ENCODE measurements at regions of chr4 and their contacts with region 1.

Region 1: GRCh38 chr4:15457406-15458201 is 12.1 kb upstream of the CC2D2A start:
- DNase-seq: no peak
- H3K4me3 ChIP-seq: no peak overlapping the region
- H3K27ac ChIP-seq: peak overlapping the region; percentile 61 to 79
- H3K4me1 ChIP-seq: peaks cover 8 to 58% of the 10 kb centered on the region in 2 donors
- H3K27me3 ChIP-seq: no peaks in the 10 kb centered on the region
- CTCF ChIP-seq: peak; percentile 65 to 79 (median 68)

Region 2: DNA sequence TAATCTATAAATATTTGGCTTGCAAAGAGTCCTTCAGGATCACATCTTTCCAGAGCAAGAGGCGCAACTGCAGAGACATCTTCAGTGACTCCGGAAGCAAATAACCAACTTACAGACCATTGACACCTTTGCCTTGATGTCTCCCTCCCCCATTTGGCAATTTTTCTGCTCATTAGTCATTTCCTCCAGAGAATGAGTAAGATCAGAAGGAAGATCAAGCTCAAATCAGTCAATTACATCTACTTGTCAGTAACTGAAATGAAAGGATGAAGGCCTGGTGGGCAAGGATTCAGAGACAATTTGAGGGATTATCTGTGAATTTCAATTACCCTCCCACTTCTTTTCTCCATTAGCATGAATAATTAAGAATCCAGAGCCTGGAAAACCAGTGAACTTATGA is 1120.9 kb before region 1 on chr4:
- intact Hi-C with region 1: no loop called
- DNase-seq: no peak
- H3K4me3 ChIP-seq: no peak overlapping the region
- H3K27ac ChIP-seq: no peak overlapping the region
- H3K4me1 ChIP-seq: no peaks in the 10 kb centered on the region
- H3K27me3 ChIP-seq: no peaks in the 10 kb centered on the region
- CTCF ChIP-seq: no peak

Region 3: GRCh38 chr4:14837860-14838259 is 619.7 kb before region 1 on chr4:
- intact Hi-C with region 1: loop called (anchors 5 kb)
- DNase-seq: no peak
- H3K4me3 ChIP-seq: no peak overlapping the region
- H3K27ac ChIP-seq: no peak overlapping the region
- H3K4me1 ChIP-seq: peaks cover 6 to 10% of the 10 kb centered on the region in 2 donors
- H3K27me3 ChIP-seq: no peaks in the 10 kb centered on the region
- CTCF ChIP-seq: peak in 2 of 3 experiments; percentile 19 to 25

Region 4: DNA sequence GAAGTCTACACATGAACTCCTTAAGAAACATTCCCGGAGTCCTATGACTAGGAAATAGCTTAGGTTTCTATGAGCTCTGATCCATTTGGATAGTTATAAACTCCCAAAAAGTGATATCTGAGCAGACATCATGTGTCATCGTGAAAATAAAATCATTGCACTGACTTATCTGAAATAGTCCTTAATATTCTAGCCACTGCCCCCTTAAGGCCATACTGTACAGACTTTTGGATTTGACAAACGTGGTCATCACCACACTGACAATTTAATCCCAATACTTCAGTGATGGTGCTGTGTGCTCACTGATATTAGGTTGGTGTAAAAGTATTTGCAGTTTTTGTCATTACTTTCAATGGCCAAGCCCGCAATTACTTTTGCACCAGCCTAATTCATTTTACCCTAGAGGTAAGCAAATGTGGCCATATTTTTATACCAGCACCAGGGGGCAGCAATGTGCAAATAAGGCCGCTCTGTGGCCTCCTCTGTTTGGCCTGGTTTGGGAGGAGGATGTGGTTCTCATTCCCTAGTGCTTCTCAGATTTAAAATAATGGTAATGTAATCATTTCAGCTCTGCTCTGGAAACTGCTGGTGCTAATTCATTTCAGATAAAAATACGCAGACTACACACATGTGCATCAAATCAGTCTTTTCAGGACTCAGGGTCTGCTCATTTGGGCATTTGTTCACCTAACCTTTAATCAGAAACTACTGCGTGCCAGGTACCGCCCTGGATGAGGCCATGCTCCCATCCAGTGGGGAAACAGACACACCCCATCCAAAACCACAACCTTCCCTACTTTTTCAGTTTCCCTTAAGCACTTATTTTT is 226.1 kb before region 1 on chr4:
- intact Hi-C with region 1: loop called (anchors 1 kb)
- DNase-seq: peak in 1 of 2 donors; percentile 92
- H3K4me3 ChIP-seq: no peak overlapping the region
- H3K27ac ChIP-seq: peak overlapping the region; percentile 66 to 86
- H3K4me1 ChIP-seq: peaks cover 21 to 41% of the 10 kb centered on the region in 2 donors
- H3K27me3 ChIP-seq: no peaks in the 10 kb centered on the region
- CTCF ChIP-seq: peak; percentile 57 to 77 (median 70)

Region 5: DNA sequence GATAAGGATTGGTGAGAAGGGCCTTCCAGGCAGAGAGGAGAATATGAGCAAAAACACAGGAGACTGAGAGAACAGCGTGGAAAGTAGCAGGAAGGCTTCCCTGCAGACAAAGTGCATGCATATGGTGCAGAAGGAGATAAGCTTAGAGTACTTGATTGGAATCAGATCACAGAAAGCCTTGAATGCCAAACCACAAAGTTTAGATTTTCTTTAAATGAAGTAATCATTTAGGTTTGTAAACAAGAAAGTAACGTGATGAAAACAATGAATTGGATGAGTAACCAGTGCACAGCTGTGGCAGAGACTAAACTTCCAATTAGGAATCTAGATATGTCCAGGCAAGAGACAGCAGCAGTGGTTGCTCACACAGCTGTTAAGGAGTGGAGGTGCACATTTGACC is 113.6 kb before region 1 on chr4:
- intact Hi-C with region 1: loop called (anchors 5 kb)
- DNase-seq: no peak
- H3K4me3 ChIP-seq: no peak overlapping the region
- H3K27ac ChIP-seq: no peak overlapping the region
- H3K4me1 ChIP-seq: peaks cover 0 to 16% of the 10 kb centered on the region in 2 donors
- H3K27me3 ChIP-seq: no peaks in the 10 kb centered on the region
- CTCF ChIP-seq: no peak

Region 6: GRCh38 chr4:15420642-15421041 is 37.0 kb before region 1 on chr4:
- intact Hi-C with region 1: loop called (anchors 5 kb)
- DNase-seq: no peak
- H3K4me3 ChIP-seq: no peak overlapping the region
- H3K27ac ChIP-seq: peak overlapping the region; percentile 67 to 77
- H3K4me1 ChIP-seq: peaks cover 10 to 77% of the 10 kb centered on the region in 2 donors
- H3K27me3 ChIP-seq: no peaks in the 10 kb centered on the region
- CTCF ChIP-seq: peak in 1 of 3 experiments; percentile 18

Region 7: DNA sequence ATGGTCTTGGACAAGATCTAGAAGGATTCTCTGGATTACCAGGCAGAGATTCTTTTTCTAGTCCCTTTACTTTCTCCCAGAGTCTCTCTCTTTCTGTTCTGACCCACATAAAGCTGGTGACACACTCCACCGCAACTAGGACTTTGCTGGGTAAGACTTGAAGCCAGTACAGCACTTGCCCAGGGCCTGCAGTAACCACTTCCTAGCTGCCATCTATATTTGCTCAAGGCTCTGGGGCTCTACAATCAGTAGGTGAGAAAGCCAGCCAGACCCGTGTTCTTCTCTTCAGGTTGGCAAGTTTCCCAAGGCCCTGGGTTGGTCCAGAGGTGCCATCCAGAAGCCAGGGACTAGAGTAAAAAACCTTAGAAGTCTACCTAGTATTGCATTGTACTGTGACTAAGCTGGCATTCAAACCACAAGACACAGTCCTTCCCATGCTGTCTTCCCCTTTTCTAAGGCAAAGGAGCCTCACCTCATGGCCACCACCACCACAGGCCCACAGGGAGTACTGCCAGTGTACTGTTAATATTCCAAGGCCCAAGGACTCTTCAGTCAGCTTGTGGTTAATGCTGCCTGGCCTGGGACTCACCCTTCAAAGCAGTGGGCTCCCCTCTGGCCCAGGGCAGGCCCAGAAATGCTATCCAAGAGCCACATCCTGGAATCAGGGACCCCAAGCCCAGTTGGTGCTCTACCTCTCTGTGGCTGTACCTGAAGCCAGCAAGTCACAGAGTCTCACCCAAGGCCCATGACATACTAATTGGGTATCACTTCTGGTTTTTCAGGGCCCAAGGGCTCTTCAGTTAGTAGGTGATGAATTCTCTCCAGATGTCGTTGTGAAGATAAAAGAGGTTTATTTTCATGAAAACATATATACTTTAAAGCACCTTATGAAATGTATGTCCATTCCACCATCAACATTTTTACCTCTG is 375.2 kb after region 1 on chr4:
- intact Hi-C with region 1: no loop called
- DNase-seq: peak in 1 of 2 donors; percentile 55
- H3K4me3 ChIP-seq: no peak overlapping the region
- H3K27ac ChIP-seq: no peak overlapping the region
- H3K4me1 ChIP-seq: no peaks in the 10 kb centered on the region
- H3K27me3 ChIP-seq: no peaks in the 10 kb centered on the region
- CTCF ChIP-seq: no peak